CD4-positive, alpha-beta memory T cell (primary cell): ENCODE measurements at regions of chr2 and their contacts with region 1.

Region 1: GRCh38 chr2:26345545-26346453 is at the start of gene SELENOI:
- DNase-seq: peak; percentile 99 to 100 (median 100)
- H3K4me3 ChIP-seq: peak within 1 kb of the TSS; percentile 87 to 98
- H3K4me3 Mint-ChIP-seq: peak within 1 kb of the TSS; percentile 97 to 100 (median 98)
- H3K27ac ChIP-seq: peak within 1 kb of the TSS; percentile 91
- H3K27ac Mint-ChIP-seq: peak within 1 kb of the TSS; percentile 91 to 100 (median 100)
- H3K4me1 ChIP-seq: peaks cover 42% of the 10 kb centered on the region
- H3K4me1 Mint-ChIP-seq: peaks cover 25 to 50% (median 33%) of the 10 kb centered on the region in 4 donors
- H3K27me3 ChIP-seq: no peaks in the 10 kb centered on the region
- H3K27me3 Mint-ChIP-seq: no peaks in the 10 kb centered on the region
- total RNA-seq, gene SELENOI: 19.6 to 20.0 TPM

Region 2: DNA sequence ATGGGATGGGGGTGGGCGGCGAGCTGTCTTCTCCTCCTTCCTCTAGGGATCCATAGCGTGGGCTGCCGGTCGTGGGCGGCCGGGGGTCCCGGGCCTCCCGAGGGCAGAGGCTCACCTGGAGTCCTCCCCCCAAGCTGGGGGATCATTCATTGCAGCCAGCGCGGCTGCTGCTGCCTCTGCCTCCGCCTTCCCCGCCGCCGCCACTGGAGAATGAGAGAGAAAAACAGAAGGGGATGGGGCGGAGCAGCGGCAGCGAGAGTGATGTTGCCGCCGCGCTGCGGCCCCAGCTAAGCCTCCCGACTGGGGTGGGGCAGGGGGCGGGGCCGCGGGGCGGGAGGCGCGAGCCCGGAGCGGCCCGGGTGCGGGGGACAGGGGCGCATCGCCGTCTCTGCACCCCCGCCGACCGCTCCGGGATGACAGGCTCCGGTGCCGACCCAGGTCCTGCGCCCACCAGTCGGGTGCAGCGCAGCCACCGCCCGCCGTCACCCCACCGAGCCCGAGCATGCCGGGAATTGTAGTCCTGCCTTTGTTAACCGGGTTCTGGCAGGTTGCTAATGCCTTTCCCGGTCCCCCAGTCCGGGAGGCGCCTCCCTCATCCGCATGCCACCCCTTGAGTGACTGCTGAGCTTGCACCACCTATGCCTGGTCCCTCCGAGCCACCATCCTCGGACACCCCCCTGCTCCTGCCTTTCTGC is 363.4 kb before region 1 on chr2 and contains the start of gene KIF3C:
- CTCF ChIA-PET with region 1: no interaction called
- POLR2A ChIA-PET with region 1: interaction called, 4 read pairs
- intact Hi-C with region 1: loop called (anchors 1 kb)
- DNase-seq: peak; percentile 71 to 81 (median 74)
- H3K4me3 ChIP-seq: peak within 1 kb of the TSS; percentile 36 to 66
- H3K4me3 Mint-ChIP-seq: peak within 1 kb of the TSS; percentile 83 to 92 (median 87)
- H3K27ac ChIP-seq: peak within 1 kb of the TSS; percentile 44
- H3K27ac Mint-ChIP-seq: peak within 1 kb of the TSS; percentile 36 to 89 (median 75)
- H3K4me1 ChIP-seq: peaks cover 11% of the 10 kb centered on the region
- H3K4me1 Mint-ChIP-seq: peaks cover 4 to 20% (median 9%) of the 10 kb centered on the region in 4 donors
- H3K27me3 ChIP-seq: no peaks in the 10 kb centered on the region
- H3K27me3 Mint-ChIP-seq: no peaks in the 10 kb centered on the region
- total RNA-seq, gene KIF3C: 4.1 to 5.1 TPM

Region 3: DNA sequence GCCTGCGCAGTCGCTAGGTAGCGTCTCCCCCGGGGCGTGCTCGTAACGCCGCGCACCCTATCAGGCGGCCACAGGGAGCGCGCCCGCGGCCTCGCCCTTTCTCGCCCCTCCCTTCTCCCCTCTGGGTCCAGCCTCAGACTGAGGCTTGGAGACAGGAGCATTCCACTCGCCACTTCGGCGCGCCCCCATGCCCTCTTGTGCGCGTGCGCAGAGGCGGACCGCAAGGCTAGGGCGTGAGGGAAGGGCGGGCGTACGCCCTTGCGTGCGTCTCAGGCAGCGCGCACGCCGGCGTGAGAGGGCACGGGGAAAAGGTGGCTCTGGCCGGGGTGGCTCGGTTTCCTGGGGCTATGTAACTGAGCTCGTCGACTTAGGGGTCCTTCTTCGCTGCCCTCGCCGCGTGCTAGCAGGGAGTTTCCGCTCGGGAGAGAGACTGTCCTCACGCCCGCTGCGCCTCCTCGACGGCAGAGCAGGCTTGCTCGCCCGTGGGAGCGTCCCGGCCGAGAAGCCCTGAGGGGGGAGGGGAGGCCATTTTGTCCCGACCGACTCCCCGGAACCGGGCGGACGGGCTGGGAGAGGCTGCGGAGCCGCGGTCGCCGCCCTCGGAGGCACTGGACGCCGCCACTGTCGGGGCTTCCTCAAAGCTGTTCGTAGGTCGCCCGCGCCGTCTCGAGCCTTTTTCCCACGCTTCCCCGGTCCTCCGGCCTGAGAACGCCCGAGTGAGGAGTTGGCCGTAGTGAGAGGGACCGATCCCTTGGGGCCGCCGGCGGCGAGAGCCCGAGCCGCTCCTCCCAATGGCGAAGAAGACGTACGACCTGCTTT is 311.8 kb before region 1 on chr2 and contains the start of gene RAB10:
- CTCF ChIA-PET with region 1: no interaction called
- POLR2A ChIA-PET with region 1: interaction called, 5 read pairs
- intact Hi-C with region 1: loop called (anchors 5 kb)
- DNase-seq: peak; percentile 99
- H3K4me3 ChIP-seq: peak within 1 kb of the TSS; percentile 94 to 99
- H3K4me3 Mint-ChIP-seq: peak within 1 kb of the TSS; percentile 94 to 99 (median 97)
- H3K27ac ChIP-seq: peak within 1 kb of the TSS; percentile 86
- H3K27ac Mint-ChIP-seq: peak within 1 kb of the TSS; percentile 89 to 99 (median 97)
- H3K4me1 ChIP-seq: peaks cover 42% of the 10 kb centered on the region
- H3K4me1 Mint-ChIP-seq: peaks cover 16 to 46% (median 36%) of the 10 kb centered on the region in 4 donors
- H3K27me3 ChIP-seq: no peaks in the 10 kb centered on the region
- H3K27me3 Mint-ChIP-seq: no peaks in the 10 kb centered on the region
- total RNA-seq, gene RAB10: 67.8 to 77.2 TPM

Region 4: GRCh38 chr2:26184555-26185303 is 161.1 kb before region 1 on chr2:
- CTCF ChIA-PET with region 1: no interaction called
- POLR2A ChIA-PET with region 1: interaction called, 14 read pairs
- intact Hi-C with region 1: no loop called
- DNase-seq: peak; percentile 83 to 89 (median 87)
- H3K4me3 ChIP-seq: peak overlapping the region; percentile 24 to 64
- H3K4me3 Mint-ChIP-seq: peak overlapping the region; percentile 83 to 89 (median 86)
- H3K27ac ChIP-seq: peak overlapping the region; percentile 24
- H3K27ac Mint-ChIP-seq: peak overlapping the region in 2 of 7 donors; percentile 46 to 83
- H3K4me1 ChIP-seq: peaks cover 19% of the 10 kb centered on the region
- H3K4me1 Mint-ChIP-seq: peaks cover 10 to 26% (median 18%) of the 10 kb centered on the region in 4 donors
- H3K27me3 ChIP-seq: no peaks in the 10 kb centered on the region
- H3K27me3 Mint-ChIP-seq: peaks cover 8 to 15% of the 10 kb centered on the region in 2 donors

Region 5: GRCh38 chr2:26235085-26235484 is 110.7 kb before region 1 on chr2:
- CTCF ChIA-PET with region 1: no interaction called
- POLR2A ChIA-PET with region 1: no interaction called
- intact Hi-C with region 1: no loop called
- DNase-seq: peak in 2 of 5 donors; percentile 2 to 4
- H3K4me3 ChIP-seq: no peak overlapping the region
- H3K4me3 Mint-ChIP-seq: no peak overlapping the region
- H3K27ac ChIP-seq: no peak overlapping the region
- H3K27ac Mint-ChIP-seq: no peak overlapping the region
- H3K4me1 ChIP-seq: peaks cover 5% of the 10 kb centered on the region
- H3K4me1 Mint-ChIP-seq: peaks cover 6 to 9% (median 7%) of the 10 kb centered on the region in 4 donors
- H3K27me3 ChIP-seq: no peaks in the 10 kb centered on the region
- H3K27me3 Mint-ChIP-seq: no peaks in the 10 kb centered on the region

Region 6: GRCh38 chr2:26299471-26300101 is 46.2 kb before region 1 on chr2:
- CTCF ChIA-PET with region 1: no interaction called
- POLR2A ChIA-PET with region 1: interaction called, 32 read pairs
- intact Hi-C with region 1: loop called (anchors 1 kb)
- DNase-seq: peak in 4 of 5 donors; percentile 37 to 50 (median 44)
- H3K4me3 ChIP-seq: peak overlapping the region; percentile 53 to 74
- H3K4me3 Mint-ChIP-seq: no peak overlapping the region
- H3K27ac ChIP-seq: peak overlapping the region; percentile 47
- H3K27ac Mint-ChIP-seq: no peak overlapping the region
- H3K4me1 ChIP-seq: peaks cover 14% of the 10 kb centered on the region
- H3K4me1 Mint-ChIP-seq: no peaks in the 10 kb centered on the region
- H3K27me3 ChIP-seq: no peaks in the 10 kb centered on the region
- H3K27me3 Mint-ChIP-seq: no peaks in the 10 kb centered on the region